ENCODE measurements at regions of chr16 and their contacts with region 1.

Region 1: GRCh38 chr16:52912565-52913173 is 140.0 kb downstream of the CHD9NB start:
- DNase-seq: peak; percentile 55 to 72
- ATAC-seq: peak; percentile 93 to 96
- H3K4me3 ChIP-seq: no peak overlapping the region
- H3K27ac ChIP-seq: no peak overlapping the region
- H3K4me1 ChIP-seq: no peaks in the 10 kb centered on the region
- CTCF ChIP-seq: peak; percentile 77
- EP300 ChIP-seq: no peak
- POLR2A ChIP-seq: no peak
- RAD21 ChIP-seq: peak; percentile 79 to 82

Region 2: GRCh38 chr16:52068447-52069074 is 844.1 kb before region 1 on chr16:
- CTCF ChIA-PET with region 1: interaction called, 15 read pairs
- POLR2A ChIA-PET with region 1: no interaction called
- DNase-seq: peak in 1 of 2 experiments; percentile 39
- ATAC-seq: peak; percentile 34 to 51; a peak in 2 of 6 replicates
- H3K4me3 ChIP-seq: no peak overlapping the region
- H3K27ac ChIP-seq: no peak overlapping the region
- H3K4me1 ChIP-seq: no peaks in the 10 kb centered on the region
- CTCF ChIP-seq: no peak; the same call in 2 of the 3 replicates
- EP300 ChIP-seq: no peak
- POLR2A ChIP-seq: no peak
- RAD21 ChIP-seq: peak; percentile 32 to 55; a peak in 3 of 5 replicates

Region 3: DNA sequence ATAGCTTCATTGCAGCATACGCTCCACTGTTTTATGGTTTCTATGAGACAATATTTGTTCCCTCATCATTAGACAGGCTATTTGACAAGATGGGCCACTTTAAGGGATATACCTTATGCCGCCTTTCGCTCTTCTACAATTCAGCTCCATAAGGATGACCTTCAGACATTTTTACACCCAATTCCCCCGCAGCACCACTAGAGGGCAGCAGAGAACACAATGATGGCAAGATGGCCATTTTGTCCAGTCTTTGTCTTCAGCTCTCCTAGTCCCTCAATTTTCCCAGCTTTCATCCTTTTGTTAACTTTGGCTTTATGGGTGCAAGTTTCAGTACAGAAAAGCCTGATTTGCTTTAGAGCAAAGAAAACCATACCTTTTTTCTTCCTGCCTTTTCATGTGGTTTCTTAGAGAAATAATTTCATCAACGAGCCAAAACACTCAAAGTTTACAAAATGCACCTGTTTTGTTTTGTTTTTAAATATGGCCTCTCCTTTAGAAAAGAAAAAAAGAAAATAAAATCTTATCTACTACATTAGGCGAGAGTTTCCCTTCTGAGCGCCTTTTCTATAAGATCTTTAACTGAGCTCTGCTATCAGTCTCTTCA is 721.0 kb before region 1 on chr16:
- CTCF ChIA-PET with region 1: interaction called, 65 read pairs
- POLR2A ChIA-PET with region 1: no interaction called
- DNase-seq: peak; percentile 41 to 70
- ATAC-seq: peak; percentile 56 to 75; a peak in 4 of 6 replicates
- H3K4me3 ChIP-seq: no peak overlapping the region
- H3K27ac ChIP-seq: no peak overlapping the region
- H3K4me1 ChIP-seq: no peaks in the 10 kb centered on the region
- CTCF ChIP-seq: peak; percentile 80
- EP300 ChIP-seq: no peak
- POLR2A ChIP-seq: no peak
- RAD21 ChIP-seq: peak; percentile 81 to 84

Region 4: DNA sequence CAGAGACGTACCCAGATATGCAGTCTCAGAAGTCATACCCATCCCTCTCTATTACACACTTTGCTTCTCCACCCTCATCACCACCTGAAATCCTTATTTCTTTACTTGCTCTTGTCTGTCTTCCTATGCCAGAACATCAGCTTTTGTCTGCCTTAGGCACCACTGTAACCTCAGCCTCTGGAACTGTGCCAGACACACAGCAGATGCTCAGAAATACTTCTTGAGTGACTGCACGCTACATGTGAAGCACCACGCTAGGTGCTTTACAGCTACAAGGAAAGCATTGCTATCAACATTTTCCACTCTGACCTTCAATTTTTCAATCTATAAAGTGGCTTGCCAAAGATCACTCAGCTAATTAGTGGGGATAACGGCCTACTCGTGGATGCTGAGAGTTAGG is 86.8 kb before region 1 on chr16:
- CTCF ChIA-PET with region 1: no interaction called
- POLR2A ChIA-PET with region 1: no interaction called
- DNase-seq: no peak
- ATAC-seq: no peak
- H3K4me3 ChIP-seq: no peak overlapping the region
- H3K27ac ChIP-seq: no peak overlapping the region
- H3K4me1 ChIP-seq: no peaks in the 10 kb centered on the region
- CTCF ChIP-seq: no peak
- EP300 ChIP-seq: no peak
- POLR2A ChIP-seq: no peak
- RAD21 ChIP-seq: no peak

Region 5: DNA sequence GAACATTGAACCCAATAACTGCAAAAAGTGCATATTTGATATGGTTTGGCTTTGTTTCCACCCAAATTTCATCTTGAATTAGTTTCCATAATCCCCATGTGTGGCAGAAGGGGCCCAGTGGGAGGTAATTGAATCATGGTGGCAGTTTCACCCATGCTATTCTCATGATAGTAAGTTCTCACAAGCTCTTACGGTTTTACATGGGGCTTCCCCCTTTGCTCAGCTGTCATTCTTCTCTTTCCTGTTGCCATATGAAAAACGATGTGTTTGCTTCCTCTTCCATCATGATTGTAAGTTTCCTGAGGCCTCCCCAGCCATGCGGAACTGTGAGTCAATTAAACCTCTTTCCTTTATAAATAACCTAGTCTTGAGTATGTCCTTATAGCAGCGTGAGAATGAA is 12.5 kb after region 1 on chr16:
- CTCF ChIA-PET with region 1: interaction called, 17 read pairs
- POLR2A ChIA-PET with region 1: no interaction called
- DNase-seq: no peak
- ATAC-seq: no peak
- H3K4me3 ChIP-seq: no peak overlapping the region
- H3K27ac ChIP-seq: no peak overlapping the region
- H3K4me1 ChIP-seq: no peaks in the 10 kb centered on the region
- CTCF ChIP-seq: no peak
- EP300 ChIP-seq: no peak
- POLR2A ChIP-seq: no peak
- RAD21 ChIP-seq: no peak

Region 6: GRCh38 chr16:52948946-52949345 is 36.3 kb after region 1 on chr16:
- CTCF ChIA-PET with region 1: interaction called, 12 read pairs
- POLR2A ChIA-PET with region 1: no interaction called
- DNase-seq: no peak
- ATAC-seq: no peak
- H3K4me3 ChIP-seq: no peak overlapping the region
- H3K27ac ChIP-seq: no peak overlapping the region
- H3K4me1 ChIP-seq: no peaks in the 10 kb centered on the region
- CTCF ChIP-seq: no peak
- EP300 ChIP-seq: no peak
- POLR2A ChIP-seq: no peak
- RAD21 ChIP-seq: no peak

Region 7: GRCh38 chr16:53022374-53022773 is 109.7 kb after region 1 on chr16:
- CTCF ChIA-PET with region 1: interaction called, 15 read pairs
- POLR2A ChIA-PET with region 1: no interaction called
- DNase-seq: peak; percentile 55 to 69
- ATAC-seq: peak; percentile 98
- H3K4me3 ChIP-seq: no peak overlapping the region
- H3K27ac ChIP-seq: no peak overlapping the region
- H3K4me1 ChIP-seq: no peaks in the 10 kb centered on the region
- CTCF ChIP-seq: peak; percentile 75
- EP300 ChIP-seq: no peak
- POLR2A ChIP-seq: no peak
- RAD21 ChIP-seq: peak; percentile 86 to 92

Region 8: DNA sequence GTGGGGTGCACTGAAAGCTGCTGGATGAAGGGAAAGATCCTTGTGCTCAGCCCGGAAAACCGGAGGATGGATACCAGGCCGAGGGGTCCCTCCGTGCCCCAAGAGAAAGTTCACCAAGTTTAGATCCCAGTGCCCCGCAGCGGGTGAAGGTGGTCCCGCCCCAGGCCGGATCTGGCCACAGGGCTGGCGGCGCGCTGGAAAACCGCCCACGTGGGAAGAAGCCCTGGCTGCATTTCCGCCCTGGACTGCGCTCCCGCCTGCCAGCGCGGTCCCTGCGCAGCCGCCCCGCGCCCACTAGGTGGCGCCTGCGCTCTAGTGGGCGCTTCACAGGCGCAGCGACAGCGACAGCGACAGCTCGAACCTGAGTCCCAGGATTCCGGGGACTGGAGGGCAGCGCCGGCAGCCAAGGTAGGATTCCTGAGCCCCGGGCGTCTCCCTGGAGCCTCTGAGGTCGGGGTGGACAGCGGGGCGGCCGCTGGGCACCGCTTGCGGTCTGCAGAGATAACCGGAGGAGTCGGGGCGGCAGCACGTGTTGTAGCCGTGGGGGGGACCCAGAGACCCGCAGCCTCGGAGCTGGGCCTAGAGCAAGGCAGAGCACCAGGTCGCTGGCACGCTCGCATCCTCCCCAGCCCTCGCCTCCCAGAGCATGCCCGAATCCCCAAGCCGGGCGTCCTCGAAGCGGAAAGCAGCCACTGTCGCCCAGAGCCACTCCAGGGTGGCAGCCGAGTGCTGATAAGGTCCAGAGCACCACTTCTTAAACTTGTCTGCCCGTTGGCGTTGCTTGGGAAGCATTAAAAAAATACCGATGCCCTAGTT is 142.2 kb after region 1 on chr16 and contains the start of gene CHD9:
- CTCF ChIA-PET with region 1: no interaction called
- POLR2A ChIA-PET with region 1: no interaction called
- DNase-seq: peak; percentile 83 to 91
- ATAC-seq: peak; percentile 70 to 89
- H3K4me3 ChIP-seq: peak within 1 kb of the TSS; percentile 53
- H3K27ac ChIP-seq: peak within 1 kb of the TSS; percentile 96 to 98
- H3K4me1 ChIP-seq: peaks cover 50% of the 10 kb centered on the region
- CTCF ChIP-seq: peak; percentile 98
- EP300 ChIP-seq: no peak
- POLR2A ChIP-seq: peak; percentile 30; the same call in 1 of the 2 replicates
- RAD21 ChIP-seq: peak; percentile 85 to 99
- polyA plus RNA-seq, gene CHD9: 44.9 and 51.6 TPM in 2 replicates

Measured in A549 (cell line).